AG04450 (cell line): ENCODE measurements at regions of chr7 and their contacts with region 1.

Region 1: GRCh38 chr7:130114374-130115135 is 44.2 kb downstream of the KLHDC10 start:
- DNase-seq: no peak
- H3K4me3 ChIP-seq: no peak overlapping the region
- H3K27ac ChIP-seq: no peak overlapping the region
- H3K27me3 ChIP-seq: no peaks in the 10 kb centered on the region
- CTCF ChIP-seq: no peak

Region 2: DNA sequence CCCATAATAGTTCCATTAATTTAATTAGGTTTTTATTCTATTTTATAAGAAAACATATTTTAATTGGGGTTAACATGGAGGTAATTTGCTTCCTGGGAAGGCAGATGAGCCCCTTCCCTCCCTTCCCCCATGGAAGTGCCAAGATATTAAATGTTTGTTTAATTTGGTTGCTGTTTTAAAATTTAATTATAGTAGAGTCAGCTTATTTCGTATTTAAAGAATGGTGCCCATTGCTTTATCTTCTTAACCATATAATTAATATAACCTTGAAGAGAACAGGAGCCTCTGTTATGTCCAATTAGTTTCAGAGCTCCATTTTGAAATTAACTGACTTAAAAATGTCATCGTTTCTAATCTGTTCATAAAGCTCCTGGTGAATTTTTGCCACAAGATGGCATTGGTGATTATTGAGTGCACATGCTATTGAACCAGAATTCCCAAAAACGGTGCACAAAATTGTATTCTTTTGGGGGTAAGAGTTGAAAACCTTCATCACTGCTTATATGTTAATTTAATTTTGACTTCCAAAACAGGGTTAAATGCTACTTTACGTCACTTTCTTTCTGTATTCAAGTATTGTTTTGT is 18.2 kb before region 1 on chr7:
- CTCF ChIA-PET with region 1: interaction called, 12 read pairs
- POLR2A ChIA-PET with region 1: no interaction called
- DNase-seq: no peak
- H3K4me3 ChIP-seq: no peak overlapping the region
- H3K27ac ChIP-seq: no peak overlapping the region
- H3K27me3 ChIP-seq: no peaks in the 10 kb centered on the region
- CTCF ChIP-seq: peak; percentile 44

Region 3: DNA sequence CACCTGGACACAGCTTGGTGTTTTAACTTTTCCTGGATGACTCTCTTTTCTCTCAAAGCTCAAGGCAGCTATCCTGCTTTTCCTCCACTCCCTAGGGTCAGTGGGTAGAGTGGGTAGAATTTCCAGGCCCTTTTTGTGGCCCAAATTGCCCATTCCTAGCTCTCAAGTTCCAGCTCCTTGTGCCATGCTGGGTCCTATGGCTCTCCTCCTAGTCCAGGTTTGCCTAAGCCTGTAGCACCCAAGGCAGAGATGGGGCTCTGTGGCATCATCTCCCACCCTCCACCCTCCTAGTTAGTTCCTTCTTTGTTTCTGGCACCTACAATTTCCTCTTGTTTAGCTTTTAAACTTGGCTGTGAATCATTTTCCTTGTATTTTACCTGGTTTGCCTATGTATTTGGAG is 188.1 kb after region 1 on chr7:
- CTCF ChIA-PET with region 1: interaction called, 11 read pairs
- POLR2A ChIA-PET with region 1: no interaction called
- DNase-seq: no peak
- H3K4me3 ChIP-seq: no peak overlapping the region
- H3K27ac ChIP-seq: no peak overlapping the region
- H3K27me3 ChIP-seq: no peaks in the 10 kb centered on the region
- CTCF ChIP-seq: no peak